Activated CD4-positive, alpha-beta T cell treated with anti-CD3 and anti-CD28 coated beads, Interleukin-2, amount 10 ng/mL, durations not matched to agents 24 days and 14 days (primary cell): ENCODE measurements at regions of chr13 and their contacts with region 1.

Region 1: GRCh38 chr13:77729502-77730221 is 32.2 kb downstream of the SLAIN1 start:
- DNase-seq: peak; percentile 84
- H3K4me3 Mint-ChIP-seq: peak overlapping the region; percentile 61
- H3K27ac Mint-ChIP-seq: peak overlapping the region; percentile 78
- H3K4me1 Mint-ChIP-seq: peaks cover 24% of the 10 kb centered on the region
- H3K27me3 Mint-ChIP-seq: no peaks in the 10 kb centered on the region

Region 2: DNA sequence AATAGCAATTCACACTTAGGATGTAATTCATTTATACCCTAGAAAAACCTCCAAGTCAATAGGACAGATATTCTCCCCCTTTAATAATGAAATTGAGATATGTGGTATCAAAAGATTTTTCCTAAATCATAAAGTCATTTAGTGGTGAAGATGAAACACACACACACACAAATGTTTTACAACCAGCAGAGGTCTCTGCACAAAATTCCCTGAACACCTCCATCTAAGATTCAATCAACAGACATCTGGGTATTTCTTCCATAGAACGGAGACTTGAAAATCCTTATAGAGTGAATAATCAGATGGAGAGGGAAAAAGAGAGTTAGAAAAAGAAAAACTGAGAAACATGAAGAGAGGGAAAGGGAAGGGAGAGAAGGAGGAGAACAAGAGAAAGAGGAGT is 455.5 kb before region 1 on chr13:
- intact Hi-C with region 1: no loop called
- DNase-seq: no peak
- H3K4me3 Mint-ChIP-seq: no peak overlapping the region
- H3K27ac Mint-ChIP-seq: no peak overlapping the region
- H3K4me1 Mint-ChIP-seq: peaks cover 11% of the 10 kb centered on the region
- H3K27me3 Mint-ChIP-seq: no peaks in the 10 kb centered on the region

Region 3: GRCh38 chr13:77715233-77715891 is 14.3 kb before region 1 on chr13:
- intact Hi-C with region 1: loop called (anchors 2 kb)
- DNase-seq: no peak
- H3K4me3 Mint-ChIP-seq: no peak overlapping the region
- H3K27ac Mint-ChIP-seq: peak overlapping the region; percentile 9
- H3K4me1 Mint-ChIP-seq: peaks cover 2% of the 10 kb centered on the region
- H3K27me3 Mint-ChIP-seq: no peaks in the 10 kb centered on the region

Region 4: DNA sequence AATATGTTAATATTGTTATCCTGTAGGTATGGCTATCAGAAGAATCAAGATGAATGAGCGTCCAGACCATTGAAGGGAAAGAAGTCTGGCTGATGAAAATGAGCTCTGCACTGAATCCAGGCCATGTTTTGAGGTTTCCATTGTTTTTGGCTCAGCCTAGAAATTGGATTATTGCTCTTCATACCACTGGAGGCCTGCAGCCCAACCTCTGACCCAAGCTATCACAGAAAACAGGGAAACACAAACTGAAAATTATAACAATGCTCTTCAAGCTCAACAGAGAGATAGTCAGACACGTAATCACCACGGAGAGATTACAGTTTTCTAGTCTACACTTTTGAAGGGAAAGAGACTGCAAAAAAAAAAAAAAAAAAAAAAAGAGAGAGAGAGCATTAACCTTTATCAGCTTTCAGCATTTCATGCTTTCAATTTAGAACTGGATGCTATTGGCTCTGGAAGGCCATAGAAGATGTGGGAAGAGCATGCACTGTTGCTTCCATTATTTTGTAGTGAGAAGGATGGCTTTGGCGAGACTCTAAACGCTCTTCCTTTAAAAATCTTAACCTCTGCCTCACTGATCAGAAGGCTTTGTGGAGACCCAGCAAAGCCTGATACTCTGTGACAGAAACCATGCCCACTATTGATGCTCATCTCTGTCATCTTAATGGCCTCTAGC is 178.1 kb after region 1 on chr13:
- intact Hi-C with region 1: no loop called
- DNase-seq: no peak
- H3K4me3 Mint-ChIP-seq: no peak overlapping the region
- H3K27ac Mint-ChIP-seq: no peak overlapping the region
- H3K4me1 Mint-ChIP-seq: no peaks in the 10 kb centered on the region
- H3K27me3 Mint-ChIP-seq: peaks cover 6% of the 10 kb centered on the region